ENCODE measurements at regions of chr15 and their contacts with region 1.

Region 1: GRCh38 chr15:78315686-78316282 is 16.4 kb upstream of the SKIC8 start:
- DNase-seq: peak; percentile 35
- H3K4me3 Mint-ChIP-seq: no peak overlapping the region
- H3K27ac Mint-ChIP-seq: no peak overlapping the region
- H3K4me1 Mint-ChIP-seq: peaks cover 20% of the 10 kb centered on the region
- H3K27me3 Mint-ChIP-seq: peaks cover 42% of the 10 kb centered on the region
- CTCF ChIP-seq: peak; percentile 13

Region 2: GRCh38 chr15:78422571-78423340 is 107.0 kb after region 1 on chr15:
- CTCF ChIA-PET with region 1: interaction called, 10 read pairs
- intact Hi-C with region 1: no loop called
- DNase-seq: peak; percentile 70
- H3K4me3 Mint-ChIP-seq: no peak overlapping the region
- H3K27ac Mint-ChIP-seq: no peak overlapping the region
- H3K4me1 Mint-ChIP-seq: peaks cover 10% of the 10 kb centered on the region
- H3K27me3 Mint-ChIP-seq: peaks cover 45% of the 10 kb centered on the region
- CTCF ChIP-seq: peak; percentile 93

Region 3: DNA sequence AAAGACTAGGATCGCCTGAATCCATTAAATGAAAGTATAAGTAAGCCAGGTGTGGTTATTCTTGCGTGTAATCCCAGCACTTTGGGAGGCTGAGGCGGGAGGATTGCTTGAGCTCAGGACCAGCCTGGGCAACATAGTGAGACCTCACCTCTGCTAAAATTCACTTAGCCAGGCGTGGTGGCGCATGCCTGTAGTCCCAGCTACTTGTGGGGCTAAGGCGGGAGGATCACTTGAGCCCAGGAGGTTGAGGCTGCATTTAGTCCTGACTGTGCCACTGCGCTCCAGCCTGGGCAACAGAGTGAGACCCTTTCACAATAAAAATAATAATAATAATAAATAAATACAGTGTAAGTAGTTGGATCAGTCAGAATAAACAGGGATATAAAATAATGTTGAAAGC is 166.1 kb after region 1 on chr15:
- CTCF ChIA-PET with region 1: interaction called, 4 read pairs
- intact Hi-C with region 1: loop called (anchors 10 kb)
- DNase-seq: no peak
- H3K4me3 Mint-ChIP-seq: no peak overlapping the region
- H3K27ac Mint-ChIP-seq: no peak overlapping the region
- H3K4me1 Mint-ChIP-seq: no peaks in the 10 kb centered on the region
- H3K27me3 Mint-ChIP-seq: no peaks in the 10 kb centered on the region
- CTCF ChIP-seq: no peak